Activated naive CD4-positive, alpha-beta T cell treated with anti-CD3 and anti-CD28 coated beads for 36 hours (primary cell): ENCODE measurements at regions of chr3 and their contacts with region 1.

Region 1: GRCh38 chr3:58568572-58569286 is 8.5 kb downstream of the FAM107A start:
- DNase-seq: peak; percentile 89
- H3K4me3 Mint-ChIP-seq: no peak overlapping the region
- H3K27ac Mint-ChIP-seq: no peak overlapping the region
- H3K4me1 Mint-ChIP-seq: peaks cover 4% of the 10 kb centered on the region
- H3K27me3 Mint-ChIP-seq: no peaks in the 10 kb centered on the region

Region 2: DNA sequence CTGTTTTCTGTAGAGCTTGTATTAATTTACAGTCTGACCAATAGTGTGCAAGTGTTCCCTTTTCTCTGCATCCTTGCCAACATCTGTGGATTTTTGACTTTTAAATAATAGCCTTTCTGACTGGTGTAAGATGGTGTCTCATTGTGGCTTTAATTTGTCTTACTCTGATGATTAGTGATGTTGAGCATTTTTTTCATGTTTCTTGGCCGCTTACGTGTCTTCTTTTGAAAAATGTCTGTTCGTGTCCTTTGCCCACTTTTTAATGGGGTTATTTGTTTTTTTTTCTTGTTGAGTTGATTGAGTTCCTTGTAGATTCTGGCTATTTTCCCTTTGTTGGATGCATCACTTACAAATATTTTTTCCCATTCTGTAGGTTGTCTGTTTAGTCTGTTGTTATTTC is 24.2 kb before region 1 on chr3:
- CTCF ChIA-PET with region 1: no interaction called
- intact Hi-C with region 1: no loop called
- DNase-seq: no peak
- H3K4me3 Mint-ChIP-seq: no peak overlapping the region
- H3K27ac Mint-ChIP-seq: no peak overlapping the region
- H3K4me1 Mint-ChIP-seq: no peaks in the 10 kb centered on the region
- H3K27me3 Mint-ChIP-seq: no peaks in the 10 kb centered on the region

Region 3: GRCh38 chr3:58556761-58557221 is 11.9 kb before region 1 on chr3:
- CTCF ChIA-PET with region 1: interaction called, 29 read pairs
- intact Hi-C with region 1: no loop called
- DNase-seq: no peak
- H3K4me3 Mint-ChIP-seq: no peak overlapping the region
- H3K27ac Mint-ChIP-seq: no peak overlapping the region
- H3K4me1 Mint-ChIP-seq: no peaks in the 10 kb centered on the region
- H3K27me3 Mint-ChIP-seq: no peaks in the 10 kb centered on the region

Region 4: GRCh38 chr3:58585005-58585786 is 16.5 kb after region 1 on chr3:
- CTCF ChIA-PET with region 1: interaction called, 34 read pairs
- intact Hi-C with region 1: no loop called
- DNase-seq: peak; percentile 79
- H3K4me3 Mint-ChIP-seq: peak overlapping the region; percentile 82
- H3K27ac Mint-ChIP-seq: no peak overlapping the region
- H3K4me1 Mint-ChIP-seq: peaks cover 17% of the 10 kb centered on the region
- H3K27me3 Mint-ChIP-seq: peaks cover 35% of the 10 kb centered on the region

Region 5: DNA sequence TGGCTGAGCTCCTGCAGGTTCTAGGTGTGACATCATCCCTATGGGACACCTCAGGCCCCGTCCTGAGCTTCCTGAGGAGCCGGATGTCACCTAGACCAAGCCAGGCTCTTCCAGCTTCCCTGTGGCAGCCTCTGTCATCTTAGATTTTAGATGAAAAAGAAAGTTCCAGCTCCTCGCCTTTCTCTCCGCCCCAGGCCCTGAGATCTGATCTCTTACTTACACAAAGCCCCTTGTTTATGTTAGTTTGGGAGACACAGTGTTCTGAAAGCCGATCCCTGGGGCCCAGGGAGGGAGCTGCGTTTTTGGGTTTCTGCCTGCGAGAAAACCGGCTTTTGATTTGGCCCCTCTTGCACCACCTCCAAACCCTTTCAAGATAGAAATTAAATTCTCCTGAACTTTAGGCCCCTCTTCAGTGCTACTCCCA is 48.6 kb after region 1 on chr3:
- CTCF ChIA-PET with region 1: interaction called, 17 read pairs
- intact Hi-C with region 1: no loop called
- DNase-seq: no peak
- H3K4me3 Mint-ChIP-seq: no peak overlapping the region
- H3K27ac Mint-ChIP-seq: no peak overlapping the region
- H3K4me1 Mint-ChIP-seq: no peaks in the 10 kb centered on the region
- H3K27me3 Mint-ChIP-seq: no peaks in the 10 kb centered on the region

Region 6: GRCh38 chr3:58640700-58641372 is 72.1 kb after region 1 on chr3:
- CTCF ChIA-PET with region 1: interaction called, 35 read pairs
- intact Hi-C with region 1: no loop called
- DNase-seq: peak; percentile 76
- H3K4me3 Mint-ChIP-seq: no peak overlapping the region
- H3K27ac Mint-ChIP-seq: no peak overlapping the region
- H3K4me1 Mint-ChIP-seq: no peaks in the 10 kb centered on the region
- H3K27me3 Mint-ChIP-seq: peaks cover 2% of the 10 kb centered on the region

Region 7: DNA sequence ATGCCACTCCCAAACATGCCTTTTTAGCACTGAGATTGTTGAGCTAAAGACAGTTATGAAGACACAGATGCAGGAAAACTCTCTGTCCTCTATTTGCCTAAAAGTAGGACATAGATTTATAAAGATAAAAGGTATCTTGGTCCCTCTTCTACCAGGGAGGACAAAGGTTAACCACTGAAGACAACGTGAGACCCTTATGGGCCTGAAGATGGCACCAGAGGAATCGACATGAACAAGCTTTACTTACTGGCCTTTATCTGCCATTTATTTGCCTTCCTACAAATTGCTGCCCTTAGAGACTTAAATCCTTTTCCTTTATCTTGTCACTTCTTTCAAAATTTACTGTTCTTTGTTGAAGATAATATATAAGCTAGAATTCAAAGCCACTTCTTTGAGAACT is 207.5 kb after region 1 on chr3:
- CTCF ChIA-PET with region 1: no interaction called
- intact Hi-C with region 1: no loop called
- DNase-seq: no peak
- H3K4me3 Mint-ChIP-seq: no peak overlapping the region
- H3K27ac Mint-ChIP-seq: no peak overlapping the region
- H3K4me1 Mint-ChIP-seq: no peaks in the 10 kb centered on the region
- H3K27me3 Mint-ChIP-seq: peaks cover 7% of the 10 kb centered on the region